Activated CD4-positive, alpha-beta T cell treated with anti-CD3 and anti-CD28 coated beads, Interleukin-2, amount 10 ng/mL, durations not matched to agents 24 days and 14 days (primary cell): ENCODE measurements at regions of chr20 and their contacts with region 1.

Region 1: DNA sequence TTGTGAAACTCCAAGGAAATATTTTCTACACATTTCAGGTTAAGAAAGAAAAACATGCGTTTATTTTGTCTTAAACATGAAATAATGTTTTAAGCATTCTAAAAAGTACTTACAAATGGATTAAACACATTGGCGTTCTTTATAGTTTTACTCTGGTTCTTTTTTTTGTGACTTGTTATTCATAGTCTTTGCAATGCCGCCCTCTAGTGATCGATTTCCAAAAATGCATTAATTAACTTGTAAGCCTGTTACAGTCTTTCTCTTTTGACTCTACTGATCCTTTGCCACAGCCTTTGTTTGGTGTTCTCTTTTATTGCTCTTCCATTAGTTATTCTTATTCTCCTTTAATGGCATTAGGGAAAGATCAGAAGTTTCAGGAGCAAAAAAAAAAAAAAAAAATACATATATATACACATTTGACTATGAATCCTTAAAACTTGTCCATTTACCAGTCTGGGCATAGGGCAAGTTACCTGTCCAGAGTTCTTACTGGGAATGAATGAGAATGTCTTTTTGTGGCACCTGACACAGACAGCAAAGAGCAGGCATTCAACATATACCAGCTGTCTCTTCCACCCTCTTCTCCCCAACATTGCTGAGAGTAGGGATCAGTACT is 59.9 kb downstream of the MACROD2 start:
- DNase-seq: peak; percentile 69
- H3K4me3 Mint-ChIP-seq: no peak overlapping the region
- H3K27ac Mint-ChIP-seq: no peak overlapping the region
- H3K4me1 Mint-ChIP-seq: no peaks in the 10 kb centered on the region
- H3K27me3 Mint-ChIP-seq: no peaks in the 10 kb centered on the region

Region 2: DNA sequence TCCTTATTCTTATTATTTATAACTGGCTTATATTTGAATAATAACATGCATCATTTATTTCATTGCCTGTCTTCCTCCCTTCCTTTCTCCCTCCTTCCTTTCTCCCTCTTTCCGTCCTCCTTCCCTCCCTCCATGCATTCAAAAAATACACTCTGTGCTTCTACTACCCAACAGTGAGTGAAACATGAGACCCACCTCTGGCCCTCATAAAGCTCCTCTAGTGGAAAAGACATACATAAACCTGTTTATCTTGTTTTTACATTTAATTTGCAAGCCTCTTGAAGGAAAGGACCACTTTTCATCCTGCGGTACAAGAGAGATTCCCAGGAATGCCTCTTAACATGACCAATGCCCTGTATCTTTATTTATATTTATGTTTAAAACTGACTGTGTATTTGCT is 856.0 kb before region 1 on chr20:
- intact Hi-C with region 1: no loop called
- DNase-seq: no peak
- H3K4me3 Mint-ChIP-seq: no peak overlapping the region
- H3K27ac Mint-ChIP-seq: no peak overlapping the region
- H3K4me1 Mint-ChIP-seq: no peaks in the 10 kb centered on the region
- H3K27me3 Mint-ChIP-seq: peaks cover 3% of the 10 kb centered on the region

Region 3: GRCh38 chr20:13819885-13820645 is 235.2 kb before region 1 on chr20:
- intact Hi-C with region 1: loop called (anchors 1 kb)
- DNase-seq: peak; percentile 61
- H3K4me3 Mint-ChIP-seq: no peak overlapping the region
- H3K27ac Mint-ChIP-seq: no peak overlapping the region
- H3K4me1 Mint-ChIP-seq: peaks cover 14% of the 10 kb centered on the region
- H3K27me3 Mint-ChIP-seq: no peaks in the 10 kb centered on the region

Region 4: DNA sequence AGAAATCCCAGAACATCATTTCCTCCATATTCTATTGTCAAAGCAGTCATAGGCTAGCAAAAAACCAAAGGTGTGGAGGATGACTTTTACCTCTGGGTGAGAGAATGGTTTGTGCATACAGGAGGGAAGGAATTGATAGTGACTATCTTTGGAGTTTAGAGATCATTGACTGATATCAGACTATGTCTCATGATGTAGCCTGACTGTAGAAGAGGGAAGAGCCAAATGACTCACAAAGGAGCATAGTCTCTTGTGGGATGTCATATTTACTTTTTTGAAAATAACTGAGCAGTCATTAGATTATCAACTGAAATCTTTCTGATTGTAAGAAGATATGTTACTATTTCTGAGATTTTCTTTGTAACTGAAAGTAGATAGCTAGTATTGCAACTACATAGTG is 123.7 kb after region 1 on chr20:
- intact Hi-C with region 1: no loop called
- DNase-seq: no peak
- H3K4me3 Mint-ChIP-seq: no peak overlapping the region
- H3K27ac Mint-ChIP-seq: no peak overlapping the region
- H3K4me1 Mint-ChIP-seq: no peaks in the 10 kb centered on the region
- H3K27me3 Mint-ChIP-seq: no peaks in the 10 kb centered on the region